Activated naive CD4-positive, alpha-beta T cell treated with anti-CD3 and anti-CD28 coated beads for 36 hours (primary cell): ENCODE measurements at regions of chr20 and their contacts with region 1.

Region 1: GRCh38 chr20:47379433-47380150 is 23.1 kb upstream of the ZMYND8 start:
- DNase-seq: no peak
- H3K4me3 Mint-ChIP-seq: no peak overlapping the region
- H3K27ac Mint-ChIP-seq: no peak overlapping the region
- H3K4me1 Mint-ChIP-seq: peaks cover 18% of the 10 kb centered on the region
- H3K27me3 Mint-ChIP-seq: no peaks in the 10 kb centered on the region

Region 2: DNA sequence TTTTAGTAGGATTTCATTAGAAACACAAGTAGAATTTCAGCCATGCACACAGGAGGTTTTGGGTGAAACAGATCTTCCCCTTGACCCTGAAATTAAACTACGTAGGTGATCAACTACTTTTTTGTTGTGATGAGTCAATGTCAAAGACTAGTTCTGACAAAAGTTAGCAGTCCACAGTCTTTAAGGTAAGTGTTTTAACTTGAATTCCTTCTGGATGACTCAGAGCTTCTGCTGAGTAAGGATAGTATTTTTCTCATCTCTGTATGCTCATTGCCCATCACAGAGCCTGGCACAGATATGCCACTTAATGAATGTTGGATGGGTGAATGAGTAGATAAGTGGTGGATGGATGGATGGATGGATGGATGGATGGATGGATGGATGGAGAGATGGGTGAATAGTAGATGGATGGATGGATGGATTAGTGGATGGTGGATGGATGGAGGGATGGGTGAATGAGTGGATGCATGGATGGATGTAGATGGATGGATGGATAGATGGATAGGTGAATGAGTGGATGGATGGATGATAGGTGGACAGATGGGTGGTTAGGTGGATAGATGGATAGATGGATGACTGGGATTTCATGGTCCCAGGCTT is 188.4 kb before region 1 on chr20:
- CTCF ChIA-PET with region 1: interaction called, 113 read pairs
- intact Hi-C with region 1: loop called (anchors 1 kb)
- DNase-seq: no peak
- H3K4me3 Mint-ChIP-seq: no peak overlapping the region
- H3K27ac Mint-ChIP-seq: no peak overlapping the region
- H3K4me1 Mint-ChIP-seq: peaks cover 10% of the 10 kb centered on the region
- H3K27me3 Mint-ChIP-seq: peaks cover 16% of the 10 kb centered on the region

Region 3: DNA sequence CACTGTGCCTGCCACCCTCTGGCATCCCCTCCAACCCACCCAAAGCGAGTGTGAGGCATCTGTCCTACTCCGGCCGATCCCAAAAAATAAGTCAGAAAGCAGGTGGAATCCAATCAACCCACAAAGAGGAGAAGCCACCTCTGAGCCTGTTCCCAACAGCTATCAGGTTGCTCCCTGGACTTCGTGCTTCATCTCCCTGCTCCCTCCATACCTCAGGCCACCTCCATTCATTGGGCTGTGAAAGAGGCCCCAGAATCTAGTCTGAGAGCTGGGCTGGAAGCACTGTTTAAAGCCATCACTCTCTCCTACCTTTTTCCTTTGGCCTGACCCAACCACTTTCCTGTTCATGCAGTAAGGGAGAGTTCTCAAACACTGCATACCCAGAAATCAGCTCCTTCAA is 129.2 kb before region 1 on chr20:
- CTCF ChIA-PET with region 1: interaction called, 15 read pairs
- intact Hi-C with region 1: no loop called
- DNase-seq: no peak
- H3K4me3 Mint-ChIP-seq: no peak overlapping the region
- H3K27ac Mint-ChIP-seq: no peak overlapping the region
- H3K4me1 Mint-ChIP-seq: peaks cover 6% of the 10 kb centered on the region
- H3K27me3 Mint-ChIP-seq: no peaks in the 10 kb centered on the region

Region 4: GRCh38 chr20:47296950-47297349 is 82.6 kb before region 1 on chr20:
- CTCF ChIA-PET with region 1: interaction called, 16 read pairs
- intact Hi-C with region 1: loop called (anchors 1 kb)
- DNase-seq: peak; percentile 42
- H3K4me3 Mint-ChIP-seq: no peak overlapping the region
- H3K27ac Mint-ChIP-seq: no peak overlapping the region
- H3K4me1 Mint-ChIP-seq: peaks cover 17% of the 10 kb centered on the region
- H3K27me3 Mint-ChIP-seq: no peaks in the 10 kb centered on the region

Region 5: DNA sequence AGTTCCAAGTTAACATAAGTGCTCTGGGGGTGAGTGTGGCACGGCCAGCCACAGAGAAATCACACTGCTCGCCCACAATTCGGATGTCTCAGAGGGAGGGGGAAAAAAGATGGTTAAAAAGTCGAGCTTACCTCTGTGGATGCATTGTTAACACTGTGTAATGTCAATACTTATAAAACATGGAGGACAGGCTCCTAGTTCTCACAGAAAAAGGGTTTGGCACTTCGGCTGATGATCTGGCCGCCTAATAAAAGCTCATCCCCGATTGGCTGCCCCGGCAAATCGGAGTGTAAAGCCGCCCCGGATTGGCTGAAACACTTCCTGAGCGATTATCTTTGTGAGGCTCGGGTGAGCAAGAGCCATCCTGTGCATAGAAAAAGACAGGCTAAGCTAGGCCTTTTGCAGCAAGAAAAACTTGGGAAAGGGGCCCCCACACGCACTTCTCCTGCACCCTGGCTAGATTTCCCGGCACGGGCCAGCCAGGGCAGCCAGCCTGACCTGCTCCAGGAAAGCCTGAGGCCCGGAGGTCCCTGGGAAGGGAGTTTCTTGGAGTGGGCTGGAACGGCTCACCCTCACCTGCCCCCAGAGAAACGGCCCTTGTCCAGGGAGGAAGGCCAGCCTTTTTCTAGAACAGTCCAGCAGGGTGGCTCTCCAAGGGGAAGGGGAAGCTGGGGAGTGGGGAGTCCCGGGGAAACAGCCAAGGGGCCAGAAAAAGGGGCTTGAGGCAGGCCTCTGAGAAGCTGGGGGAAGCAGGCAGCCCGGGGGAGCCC is 22.9 kb before region 1 on chr20 and contains the start of gene ZMYND8:
- CTCF ChIA-PET with region 1: interaction called, 61 read pairs
- intact Hi-C with region 1: no loop called
- DNase-seq: peak; percentile 97
- H3K4me3 Mint-ChIP-seq: peak within 1 kb of the TSS; percentile 92
- H3K27ac Mint-ChIP-seq: peak within 1 kb of the TSS; percentile 99
- H3K4me1 Mint-ChIP-seq: peaks cover 52% of the 10 kb centered on the region
- H3K27me3 Mint-ChIP-seq: no peaks in the 10 kb centered on the region
- total RNA-seq, gene ZMYND8: 30.3 to 33.0 TPM

Region 6: GRCh38 chr20:47610247-47610944 is 230.8 kb after region 1 on chr20:
- CTCF ChIA-PET with region 1: interaction called, 10 read pairs
- intact Hi-C with region 1: no loop called
- DNase-seq: peak; percentile 97
- H3K4me3 Mint-ChIP-seq: peak overlapping the region; percentile 48
- H3K27ac Mint-ChIP-seq: peak overlapping the region; percentile 96
- H3K4me1 Mint-ChIP-seq: peaks cover 86% of the 10 kb centered on the region
- H3K27me3 Mint-ChIP-seq: no peaks in the 10 kb centered on the region